ENCODE measurements at regions of chr3 and their contacts with region 1.

Region 1: DNA sequence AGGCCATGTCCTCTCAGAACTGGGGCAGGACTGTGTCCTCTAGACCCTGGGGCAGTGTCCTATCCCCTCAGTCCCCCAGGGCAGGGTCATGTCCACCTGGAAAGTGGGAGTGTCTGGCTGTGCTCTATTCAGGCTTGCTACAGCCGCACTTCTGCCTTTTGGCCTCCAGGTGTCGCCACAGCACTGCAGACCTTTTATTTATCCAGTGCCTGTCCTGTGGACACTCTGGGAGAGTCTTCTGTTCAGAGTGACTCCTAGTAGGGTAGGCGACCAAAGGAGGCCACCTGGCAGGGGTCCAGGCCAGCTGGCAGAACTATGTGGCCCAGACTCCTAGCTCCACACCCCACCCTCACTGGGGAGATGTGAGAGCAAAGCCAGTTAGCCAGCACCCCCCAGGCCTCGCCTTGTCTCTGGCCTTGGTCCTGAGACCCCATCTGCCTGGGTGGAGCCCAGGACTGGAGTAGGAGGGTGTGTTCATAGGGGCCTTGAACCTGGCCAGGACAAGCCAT is 3.9 kb downstream of the TMIE start:
- DNase-seq: peak; percentile 75
- H3K4me3 Mint-ChIP-seq: no peak overlapping the region
- H3K27ac Mint-ChIP-seq: no peak overlapping the region
- H3K4me1 Mint-ChIP-seq: peaks cover 6% of the 10 kb centered on the region
- H3K27me3 Mint-ChIP-seq: no peaks in the 10 kb centered on the region
- CTCF ChIP-seq: peak; percentile 97

Region 2: DNA sequence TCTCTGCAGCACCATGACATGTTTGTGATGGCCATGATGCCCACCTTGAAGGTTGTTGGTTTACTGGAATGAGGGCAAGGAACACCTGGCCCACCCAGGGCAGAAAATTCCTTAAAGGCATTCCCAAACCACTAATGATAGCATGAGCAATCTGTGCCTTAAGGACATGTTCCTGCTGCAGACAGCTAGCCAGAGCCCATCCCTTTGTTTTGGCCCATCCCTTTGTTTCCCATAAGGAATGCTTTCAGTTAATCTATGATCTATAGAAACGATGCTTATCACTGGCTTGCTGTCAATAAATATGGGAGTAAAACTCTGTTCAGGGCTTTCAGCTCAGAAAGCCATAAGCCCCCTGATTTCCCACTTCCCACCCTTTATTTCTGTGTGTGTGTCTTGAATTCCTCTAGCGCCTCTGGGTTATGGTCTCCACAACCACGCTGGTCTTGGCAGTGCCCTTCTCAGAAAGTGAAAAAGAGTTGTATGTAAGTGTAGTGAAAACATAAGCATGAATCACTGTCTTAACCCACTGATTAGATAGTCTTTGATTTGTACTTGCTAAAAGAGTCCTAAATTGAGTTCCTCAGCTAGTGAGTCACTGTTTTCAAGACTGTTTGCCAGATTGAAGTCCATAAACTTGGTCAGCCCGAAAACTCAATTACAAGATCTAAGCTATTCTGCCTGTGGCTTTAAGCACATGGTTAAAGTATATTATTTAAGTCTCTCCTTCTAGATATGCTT is 370.2 kb before region 1 on chr3:
- CTCF ChIA-PET with region 1: no interaction called
- POLR2A ChIA-PET with region 1: no interaction called
- intact Hi-C with region 1: no loop called
- DNase-seq: peak; percentile 40
- H3K4me3 Mint-ChIP-seq: no peak overlapping the region
- H3K27ac Mint-ChIP-seq: peak overlapping the region; percentile 28
- H3K4me1 Mint-ChIP-seq: peaks cover 12% of the 10 kb centered on the region
- H3K27me3 Mint-ChIP-seq: peaks cover 20% of the 10 kb centered on the region
- CTCF ChIP-seq: no peak

Region 3: GRCh38 chr3:46674031-46674845 is 30.8 kb before region 1 on chr3:
- CTCF ChIA-PET with region 1: no interaction called
- POLR2A ChIA-PET with region 1: no interaction called
- intact Hi-C with region 1: no loop called
- DNase-seq: no peak
- H3K4me3 Mint-ChIP-seq: no peak overlapping the region
- H3K27ac Mint-ChIP-seq: no peak overlapping the region
- H3K4me1 Mint-ChIP-seq: no peaks in the 10 kb centered on the region
- H3K27me3 Mint-ChIP-seq: no peaks in the 10 kb centered on the region
- CTCF ChIP-seq: peak; percentile 11

Region 4: GRCh38 chr3:46895204-46895660 is 190.2 kb after region 1 on chr3:
- CTCF ChIA-PET with region 1: interaction called, 19 read pairs
- POLR2A ChIA-PET with region 1: no interaction called
- intact Hi-C with region 1: loop called (anchors 1 kb)
- DNase-seq: peak; percentile 59
- H3K4me3 Mint-ChIP-seq: no peak overlapping the region
- H3K27ac Mint-ChIP-seq: no peak overlapping the region
- H3K4me1 Mint-ChIP-seq: no peaks in the 10 kb centered on the region
- H3K27me3 Mint-ChIP-seq: peaks cover 15% of the 10 kb centered on the region
- CTCF ChIP-seq: peak; percentile 89

Region 5: GRCh38 chr3:46998121-46998851 is 293.2 kb after region 1 on chr3:
- CTCF ChIA-PET with region 1: no interaction called
- POLR2A ChIA-PET with region 1: no interaction called
- intact Hi-C with region 1: loop called (anchors 1 kb)
- DNase-seq: peak; percentile 69
- H3K4me3 Mint-ChIP-seq: no peak overlapping the region
- H3K27ac Mint-ChIP-seq: no peak overlapping the region
- H3K4me1 Mint-ChIP-seq: peaks cover 5% of the 10 kb centered on the region
- H3K27me3 Mint-ChIP-seq: no peaks in the 10 kb centered on the region
- CTCF ChIP-seq: peak; percentile 80

Region 6: DNA sequence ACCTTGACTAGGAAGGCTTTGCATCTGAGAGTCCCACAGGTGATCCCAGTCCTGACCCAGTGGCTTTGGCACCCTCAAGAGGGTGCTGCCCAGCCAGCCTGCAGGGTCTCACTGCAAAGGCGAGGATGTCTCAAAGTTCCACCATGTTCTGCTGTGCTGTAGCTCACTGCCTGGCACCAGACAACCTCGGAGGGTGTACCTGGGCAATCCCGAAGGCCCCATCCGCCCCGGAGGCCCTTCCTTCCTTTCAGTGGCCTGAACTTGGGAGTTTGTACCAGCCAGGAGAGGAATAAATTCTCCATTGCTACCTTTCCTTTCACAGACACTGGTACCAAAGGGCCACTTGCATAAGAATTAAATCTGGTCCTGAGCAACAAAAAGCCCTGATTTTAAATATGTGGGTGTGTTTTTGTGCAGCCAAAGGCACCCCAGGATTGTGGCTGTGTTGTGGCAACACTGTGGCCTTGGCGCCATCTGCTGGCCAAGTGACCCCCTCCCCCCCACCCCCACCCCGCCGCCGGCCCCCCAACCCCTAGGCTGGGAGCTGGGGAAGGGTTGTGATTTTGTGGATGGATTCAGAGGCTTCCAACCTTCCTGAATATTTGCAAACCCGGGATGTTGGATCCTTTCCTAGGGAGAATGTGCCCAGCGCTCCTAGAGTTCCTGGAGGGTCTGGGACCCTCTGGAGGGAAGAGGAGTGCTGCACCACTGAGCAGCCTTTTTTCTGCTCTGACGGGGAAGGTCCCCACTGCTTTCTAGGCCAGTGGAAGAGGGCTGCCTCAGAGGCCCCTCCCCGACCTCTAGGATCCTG is 666.0 kb after region 1 on chr3:
- CTCF ChIA-PET with region 1: interaction called, 3 read pairs
- POLR2A ChIA-PET with region 1: no interaction called
- intact Hi-C with region 1: loop called (anchors 2 kb)
- DNase-seq: peak; percentile 27
- H3K4me3 Mint-ChIP-seq: no peak overlapping the region
- H3K27ac Mint-ChIP-seq: no peak overlapping the region
- H3K4me1 Mint-ChIP-seq: no peaks in the 10 kb centered on the region
- H3K27me3 Mint-ChIP-seq: peaks cover 12% of the 10 kb centered on the region
- CTCF ChIP-seq: peak; percentile 57